GM12878 (cell line): ENCODE measurements at regions of chr3 and their contacts with region 1.

Region 1: GRCh38 chr3:117486719-117487716 is 777.4 kb downstream of the TUSC7 start:
- DNase-seq: peak; percentile 40
- ATAC-seq: peak; percentile 88
- H3K4me3 ChIP-seq: no peak overlapping the region
- H3K27ac ChIP-seq: no peak overlapping the region
- H3K4me1 ChIP-seq: no peaks in the 10 kb centered on the region
- H3K27me3 ChIP-seq: no peaks in the 10 kb centered on the region; a peak in 1 of 4 replicates
- CTCF ChIP-seq: no peak
- EP300 ChIP-seq: peak; percentile 48 to 79; a peak in 2 of 4 replicates
- POLR2A ChIP-seq: no peak
- RAD21 ChIP-seq: no peak

Region 2: DNA sequence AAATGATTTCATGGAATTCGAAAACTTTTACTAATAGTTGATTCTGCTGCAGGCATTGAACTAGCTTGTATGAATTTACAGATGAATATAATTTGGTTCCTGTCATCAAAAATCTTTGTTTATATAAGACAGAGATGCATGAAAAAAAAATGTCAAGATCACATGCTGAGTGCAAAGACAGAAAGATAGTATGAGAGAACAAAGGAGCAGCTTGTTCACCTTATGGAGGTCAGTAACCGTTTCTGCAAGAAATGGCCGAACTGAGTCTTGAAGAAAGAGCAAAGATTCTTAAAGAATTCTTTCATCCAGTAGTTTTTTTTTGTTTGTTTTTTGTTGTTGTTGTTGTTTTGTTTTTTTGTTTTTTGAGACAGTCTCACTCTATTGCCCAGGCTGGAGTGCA is 326.8 kb before region 1 on chr3:
- CTCF ChIA-PET with region 1: no interaction called
- POLR2A ChIA-PET with region 1: no interaction called
- RAD21 ChIA-PET with region 1: no interaction called
- SMC1A ChIA-PET with region 1: no interaction called
- in situ Hi-C with region 1: no loop called
- intact Hi-C with region 1: no loop called
- DNase-seq: no peak
- ATAC-seq: no peak
- H3K4me3 ChIP-seq: no peak overlapping the region
- H3K27ac ChIP-seq: no peak overlapping the region
- H3K4me1 ChIP-seq: no peaks in the 10 kb centered on the region
- H3K27me3 ChIP-seq: no peaks in the 10 kb centered on the region
- CTCF ChIP-seq: no peak
- EP300 ChIP-seq: no peak
- POLR2A ChIP-seq: no peak
- RAD21 ChIP-seq: no peak

Region 3: DNA sequence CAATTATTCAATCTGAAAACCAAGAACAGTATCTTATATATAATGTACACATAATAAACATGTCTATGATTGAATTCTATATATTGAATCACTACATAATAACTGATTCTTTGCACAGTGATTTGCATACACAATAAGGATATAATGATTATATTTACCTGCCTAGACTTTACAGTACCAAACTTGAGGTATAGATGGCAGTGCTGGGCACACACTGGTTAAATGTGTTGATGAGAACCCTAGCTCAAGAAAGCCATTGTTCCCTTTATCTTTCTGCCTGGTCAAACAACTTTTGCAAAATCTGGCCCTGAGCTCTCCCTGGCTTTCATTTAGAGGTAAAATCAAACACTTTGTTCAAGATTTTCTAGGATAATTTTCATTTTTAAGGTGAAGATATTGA is 79.7 kb before region 1 on chr3:
- CTCF ChIA-PET with region 1: interaction called, 11 read pairs
- POLR2A ChIA-PET with region 1: no interaction called
- RAD21 ChIA-PET with region 1: interaction called, 6 read pairs
- SMC1A ChIA-PET with region 1: interaction called, 3 read pairs
- in situ Hi-C with region 1: no loop called
- intact Hi-C with region 1: no loop called
- DNase-seq: no peak
- ATAC-seq: peak; percentile 91
- H3K4me3 ChIP-seq: no peak overlapping the region
- H3K27ac ChIP-seq: no peak overlapping the region
- H3K4me1 ChIP-seq: no peaks in the 10 kb centered on the region
- H3K27me3 ChIP-seq: no peaks in the 10 kb centered on the region; a peak in 1 of 4 replicates
- CTCF ChIP-seq: peak; percentile 27 to 61 (median 42); a peak in 5 of 6 replicates
- EP300 ChIP-seq: no peak
- POLR2A ChIP-seq: no peak
- RAD21 ChIP-seq: peak; percentile 40; the same call in 1 of the 2 replicates

Region 4: GRCh38 chr3:117439812-117440211 is 47.2 kb before region 1 on chr3:
- CTCF ChIA-PET with region 1: interaction called, 4 read pairs
- POLR2A ChIA-PET with region 1: no interaction called
- RAD21 ChIA-PET with region 1: interaction called, 4 read pairs
- SMC1A ChIA-PET with region 1: interaction called, 10 read pairs
- in situ Hi-C with region 1: no loop called
- intact Hi-C with region 1: no loop called
- DNase-seq: no peak
- ATAC-seq: no peak
- H3K4me3 ChIP-seq: no peak overlapping the region
- H3K27ac ChIP-seq: no peak overlapping the region
- H3K4me1 ChIP-seq: no peaks in the 10 kb centered on the region
- H3K27me3 ChIP-seq: no peaks in the 10 kb centered on the region; a peak in 2 of 4 replicates
- CTCF ChIP-seq: no peak
- EP300 ChIP-seq: no peak
- POLR2A ChIP-seq: no peak
- RAD21 ChIP-seq: no peak

Region 5: DNA sequence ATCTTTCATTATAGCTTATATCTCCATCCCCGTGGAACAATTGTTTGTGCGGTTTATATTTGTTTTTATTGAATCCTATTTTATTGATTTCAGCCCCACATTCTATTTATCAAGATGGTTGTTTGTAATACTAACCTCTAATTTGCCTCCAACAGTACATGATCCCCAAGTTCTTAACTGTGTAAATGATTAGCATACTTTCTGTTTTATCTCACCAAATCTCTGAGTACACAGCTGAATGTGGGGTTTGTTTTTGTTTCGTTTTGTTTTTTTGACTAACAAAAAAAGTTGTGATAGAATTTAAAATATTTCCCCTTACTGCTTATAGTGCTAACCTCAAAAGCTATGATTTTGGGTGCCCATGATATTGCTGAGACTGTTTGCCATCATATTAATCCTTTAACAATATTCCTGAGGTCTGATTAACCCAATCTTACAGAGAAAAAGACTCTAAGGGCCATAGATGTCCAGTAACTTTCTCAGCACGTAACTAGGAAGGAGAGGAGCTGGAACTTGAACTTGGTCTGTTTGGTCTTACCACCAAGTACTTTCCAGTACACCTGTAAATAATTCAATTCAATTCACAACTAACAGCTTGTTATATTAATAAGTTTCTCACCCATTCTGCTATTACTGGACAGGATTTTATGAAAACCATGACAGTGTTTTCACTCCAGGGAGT is 12.3 kb after region 1 on chr3:
- CTCF ChIA-PET with region 1: interaction called, 22 read pairs
- POLR2A ChIA-PET with region 1: interaction called, 20 read pairs
- RAD21 ChIA-PET with region 1: interaction called, 19 read pairs
- SMC1A ChIA-PET with region 1: interaction called, 89 read pairs
- in situ Hi-C with region 1: no loop called
- intact Hi-C with region 1: no loop called
- DNase-seq: no peak
- ATAC-seq: peak; percentile 76
- H3K4me3 ChIP-seq: no peak overlapping the region
- H3K27ac ChIP-seq: no peak overlapping the region
- H3K4me1 ChIP-seq: no peaks in the 10 kb centered on the region
- H3K27me3 ChIP-seq: no peaks in the 10 kb centered on the region
- CTCF ChIP-seq: no peak
- EP300 ChIP-seq: no peak
- POLR2A ChIP-seq: no peak
- RAD21 ChIP-seq: no peak

Region 6: GRCh38 chr3:117510396-117510795 is 23.4 kb after region 1 on chr3:
- CTCF ChIA-PET with region 1: no interaction called
- POLR2A ChIA-PET with region 1: no interaction called
- RAD21 ChIA-PET with region 1: interaction called, 39 read pairs
- SMC1A ChIA-PET with region 1: interaction called, 89 read pairs
- in situ Hi-C with region 1: no loop called
- intact Hi-C with region 1: no loop called
- DNase-seq: no peak
- ATAC-seq: no peak
- H3K4me3 ChIP-seq: no peak overlapping the region
- H3K27ac ChIP-seq: no peak overlapping the region
- H3K4me1 ChIP-seq: no peaks in the 10 kb centered on the region
- H3K27me3 ChIP-seq: no peaks in the 10 kb centered on the region
- CTCF ChIP-seq: no peak
- EP300 ChIP-seq: no peak
- POLR2A ChIP-seq: no peak
- RAD21 ChIP-seq: no peak

Region 7: DNA sequence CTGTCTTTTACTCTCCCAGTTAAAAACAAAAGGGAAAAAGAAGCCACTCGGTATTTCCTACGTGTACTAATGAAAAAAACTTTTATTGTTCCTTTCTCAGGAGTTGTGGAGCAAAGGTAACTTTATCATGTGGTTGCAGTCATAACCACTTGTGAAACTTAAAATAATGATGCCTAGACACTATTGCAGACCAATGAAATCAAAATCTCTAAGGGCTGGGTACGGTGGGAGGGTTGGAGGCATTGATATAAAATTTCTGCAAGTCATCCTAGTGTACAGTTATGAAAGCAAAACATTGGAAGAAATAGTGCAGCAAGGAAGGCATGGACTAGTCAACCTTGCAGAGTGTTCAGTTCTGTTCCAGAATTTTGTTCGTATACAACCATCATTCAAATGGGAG is 31.3 kb after region 1 on chr3:
- CTCF ChIA-PET with region 1: interaction called, 3 read pairs
- POLR2A ChIA-PET with region 1: no interaction called
- RAD21 ChIA-PET with region 1: interaction called, 36 read pairs
- SMC1A ChIA-PET with region 1: interaction called, 57 read pairs
- in situ Hi-C with region 1: no loop called
- intact Hi-C with region 1: no loop called
- DNase-seq: no peak
- ATAC-seq: no peak
- H3K4me3 ChIP-seq: no peak overlapping the region
- H3K27ac ChIP-seq: no peak overlapping the region
- H3K4me1 ChIP-seq: no peaks in the 10 kb centered on the region
- H3K27me3 ChIP-seq: no peaks in the 10 kb centered on the region
- CTCF ChIP-seq: no peak
- EP300 ChIP-seq: no peak
- POLR2A ChIP-seq: no peak
- RAD21 ChIP-seq: no peak